ENCODE measurements at regions of chr7 and their contacts with region 1.

Region 1: DNA sequence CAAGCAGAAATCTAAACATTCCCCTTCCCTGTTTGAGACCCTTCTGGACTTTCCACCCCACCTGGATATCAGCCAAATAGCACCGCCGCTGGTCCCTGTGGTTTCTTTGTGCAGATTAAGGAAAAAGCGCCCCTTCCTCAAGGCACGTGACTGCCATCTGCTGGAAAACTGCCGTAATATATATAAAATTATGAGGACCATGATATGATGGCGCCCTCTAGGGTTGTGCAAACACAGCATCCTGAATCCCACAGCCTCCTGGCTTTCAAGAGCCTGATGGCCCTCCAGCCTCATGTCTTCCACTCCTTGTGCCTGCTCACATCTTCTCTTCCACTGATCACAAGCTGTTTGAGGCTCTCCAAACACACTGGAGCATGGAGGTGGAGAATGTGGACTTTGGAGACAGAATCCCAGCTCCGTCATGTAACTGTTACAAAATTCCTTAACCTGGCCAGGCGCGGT is 121.3 kb downstream of the MYL10 start:
- H3K4me3 ChIP-seq: no peak overlapping the region
- H3K27ac ChIP-seq: no peak overlapping the region
- H3K4me1 ChIP-seq: no peaks in the 10 kb centered on the region
- CTCF ChIP-seq: peak; percentile 94

Region 2: GRCh38 chr7:101321491-101322401 is 186.1 kb before region 1 on chr7 and contains the start of gene IFT22:
- CTCF ChIA-PET with region 1: interaction called, 21 read pairs
- POLR2A ChIA-PET with region 1: interaction called, 3 read pairs
- H3K4me3 ChIP-seq: peak within 1 kb of the TSS; percentile 87
- H3K27ac ChIP-seq: peak within 1 kb of the TSS; percentile 78
- H3K4me1 ChIP-seq: no peaks in the 10 kb centered on the region
- CTCF ChIP-seq: peak; percentile 49

Region 3: DNA sequence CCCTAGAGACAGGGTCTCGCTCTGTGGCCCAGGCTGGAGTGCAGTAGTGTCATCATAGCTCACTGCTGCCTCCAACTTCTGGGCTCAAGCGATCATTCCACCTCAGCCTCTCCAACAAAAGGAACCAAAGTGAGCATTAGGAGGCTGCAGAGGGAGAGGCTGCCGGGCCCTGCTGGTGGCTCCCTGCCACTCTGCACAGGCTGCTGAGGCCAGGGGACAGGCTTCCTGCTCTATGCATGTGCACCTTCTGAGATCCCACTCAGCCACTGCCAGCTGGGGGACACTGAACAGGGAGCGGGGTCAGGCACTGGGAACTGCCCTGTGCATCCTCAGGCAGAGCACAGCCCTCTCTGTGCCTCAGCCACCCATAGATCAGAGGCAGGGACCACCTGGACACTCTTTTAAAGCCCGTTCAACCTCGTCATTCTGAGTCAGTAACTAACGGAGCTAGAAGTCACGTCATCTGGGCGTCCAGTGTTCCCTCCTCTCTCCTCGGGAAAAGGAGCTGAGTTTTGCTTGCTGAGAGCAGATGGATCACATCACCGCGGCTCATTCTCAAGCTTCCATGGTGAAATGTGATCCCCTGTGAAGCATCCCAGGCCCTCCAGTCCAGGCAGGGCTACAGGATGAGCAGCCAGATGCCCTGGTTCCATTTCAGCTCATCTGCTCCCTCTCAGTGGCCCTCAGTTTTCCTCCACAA is 11.7 kb after region 1 on chr7:
- CTCF ChIA-PET with region 1: interaction called, 28 read pairs
- POLR2A ChIA-PET with region 1: no interaction called
- H3K4me3 ChIP-seq: no peak overlapping the region
- H3K27ac ChIP-seq: no peak overlapping the region
- H3K4me1 ChIP-seq: no peaks in the 10 kb centered on the region
- CTCF ChIP-seq: no peak

Region 4: DNA sequence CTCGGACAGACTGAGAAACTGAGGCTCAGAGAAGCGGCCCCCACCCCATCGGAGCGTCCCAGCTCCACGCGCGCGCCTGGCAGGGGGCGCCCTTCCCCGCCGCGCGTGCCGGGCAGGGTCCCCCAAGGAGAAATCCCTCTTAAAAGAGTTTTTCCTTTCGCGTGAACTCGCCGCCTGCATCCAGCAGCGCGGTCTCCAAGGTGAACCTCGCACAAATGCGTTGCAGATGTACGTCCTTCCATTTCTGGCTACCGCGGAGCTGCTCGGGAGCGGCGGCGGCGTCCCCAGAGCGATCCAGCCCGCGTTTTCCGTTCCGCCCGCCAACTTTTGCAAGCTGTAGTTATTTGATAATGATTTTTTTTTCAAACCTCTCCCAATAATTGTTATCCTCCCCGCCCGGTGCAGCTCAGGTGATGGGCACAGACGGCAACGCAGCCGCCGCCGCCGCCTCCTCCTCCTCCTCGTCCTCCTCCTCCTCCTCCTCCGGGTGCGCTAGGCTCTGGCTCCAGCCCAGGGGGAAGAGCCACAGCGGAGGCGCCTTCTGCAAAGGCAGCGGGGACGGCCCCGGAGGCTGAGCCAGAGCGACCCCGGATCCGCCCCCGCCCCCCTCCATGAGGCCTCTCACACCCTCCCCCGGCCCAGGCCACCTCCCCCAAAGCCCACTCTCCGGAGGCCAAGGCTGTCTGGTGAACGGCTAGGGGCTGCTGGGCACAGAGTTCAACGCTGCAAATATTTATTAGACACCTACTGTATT is 235.6 kb after region 1 on chr7:
- CTCF ChIA-PET with region 1: no interaction called
- POLR2A ChIA-PET with region 1: no interaction called
- H3K4me3 ChIP-seq: peak overlapping the region; percentile 49
- H3K27ac ChIP-seq: no peak overlapping the region; the same call in 1 of the 2 replicates
- H3K4me1 ChIP-seq: no peaks in the 10 kb centered on the region
- CTCF ChIP-seq: peak; percentile 73